ENCODE measurements at regions of chr5 and their contacts with region 1.

Region 1: DNA sequence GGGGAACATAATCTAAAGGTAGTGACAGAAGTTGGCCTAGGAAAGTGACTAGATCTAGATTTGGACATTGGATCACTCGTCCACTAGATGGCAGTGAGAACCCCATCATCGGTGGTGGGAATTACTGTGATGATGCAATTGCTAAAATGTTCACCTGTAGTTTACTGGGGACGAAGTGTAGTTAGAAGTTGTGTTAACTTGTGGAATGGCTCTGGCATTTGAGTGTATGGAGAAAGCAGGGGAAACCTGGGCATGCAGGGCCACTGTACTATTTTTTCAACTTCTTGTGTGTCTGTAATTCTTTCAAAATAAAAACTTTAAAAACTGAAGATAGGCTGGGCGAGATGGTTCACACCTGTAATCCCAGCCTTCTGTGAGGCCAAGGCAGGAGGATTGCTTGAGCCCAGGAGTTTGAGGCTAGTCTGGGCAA is 75.5 kb downstream of the PHAX start:
- DNase-seq: peak; percentile 18
- H3K4me3 ChIP-seq: no peak overlapping the region
- H3K27ac ChIP-seq: no peak overlapping the region
- H3K27me3 ChIP-seq: no peaks in the 10 kb centered on the region
- CTCF ChIP-seq: peak; percentile 87

Region 2: GRCh38 chr5:126471875-126472537 is 204.2 kb before region 1 on chr5:
- CTCF ChIA-PET with region 1: no interaction called
- POLR2A ChIA-PET with region 1: no interaction called
- DNase-seq: peak; percentile 42
- H3K4me3 ChIP-seq: no peak overlapping the region; the same call in 1 of the 2 replicates
- H3K27ac ChIP-seq: peak overlapping the region; percentile 58
- H3K27me3 ChIP-seq: no peaks in the 10 kb centered on the region
- CTCF ChIP-seq: no peak

Region 3: GRCh38 chr5:126656396-126657007 is 19.7 kb before region 1 on chr5:
- CTCF ChIA-PET with region 1: interaction called, 26 read pairs
- POLR2A ChIA-PET with region 1: no interaction called
- DNase-seq: peak; percentile 18
- H3K4me3 ChIP-seq: no peak overlapping the region
- H3K27ac ChIP-seq: no peak overlapping the region
- H3K27me3 ChIP-seq: no peaks in the 10 kb centered on the region
- CTCF ChIP-seq: peak; percentile 96

Region 4: GRCh38 chr5:126794157-126794828 is 118.1 kb after region 1 on chr5:
- CTCF ChIA-PET with region 1: interaction called, 15 read pairs
- POLR2A ChIA-PET with region 1: no interaction called
- DNase-seq: no peak
- H3K4me3 ChIP-seq: no peak overlapping the region
- H3K27ac ChIP-seq: no peak overlapping the region
- H3K27me3 ChIP-seq: no peaks in the 10 kb centered on the region
- CTCF ChIP-seq: no peak

Region 5: DNA sequence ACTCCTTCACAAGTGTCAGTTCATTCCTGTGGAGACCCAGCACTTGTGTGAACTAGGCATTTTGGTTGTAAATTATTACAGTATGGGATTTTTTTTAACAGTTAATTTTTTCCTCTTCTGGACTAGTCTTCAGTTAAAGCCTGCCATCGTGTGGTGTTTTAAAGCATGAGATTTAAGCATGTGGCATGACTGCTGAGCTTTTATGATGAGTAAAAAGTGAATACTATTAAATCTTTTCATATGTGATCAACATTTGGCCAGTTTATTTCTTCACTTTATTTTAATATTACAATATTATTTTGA is 125.7 kb after region 1 on chr5:
- CTCF ChIA-PET with region 1: interaction called, 159 read pairs
- POLR2A ChIA-PET with region 1: no interaction called
- DNase-seq: no peak
- H3K4me3 ChIP-seq: no peak overlapping the region
- H3K27ac ChIP-seq: no peak overlapping the region
- H3K27me3 ChIP-seq: no peaks in the 10 kb centered on the region
- CTCF ChIP-seq: peak; percentile 59

Region 6: GRCh38 chr5:126808521-126808988 is 132.3 kb after region 1 on chr5:
- CTCF ChIA-PET with region 1: interaction called, 159 read pairs
- POLR2A ChIA-PET with region 1: no interaction called
- DNase-seq: no peak
- H3K4me3 ChIP-seq: no peak overlapping the region
- H3K27ac ChIP-seq: no peak overlapping the region
- H3K27me3 ChIP-seq: no peaks in the 10 kb centered on the region
- CTCF ChIP-seq: peak; percentile 60